ENCODE measurements at regions of chr2 and their contacts with region 1.

Region 1: DNA sequence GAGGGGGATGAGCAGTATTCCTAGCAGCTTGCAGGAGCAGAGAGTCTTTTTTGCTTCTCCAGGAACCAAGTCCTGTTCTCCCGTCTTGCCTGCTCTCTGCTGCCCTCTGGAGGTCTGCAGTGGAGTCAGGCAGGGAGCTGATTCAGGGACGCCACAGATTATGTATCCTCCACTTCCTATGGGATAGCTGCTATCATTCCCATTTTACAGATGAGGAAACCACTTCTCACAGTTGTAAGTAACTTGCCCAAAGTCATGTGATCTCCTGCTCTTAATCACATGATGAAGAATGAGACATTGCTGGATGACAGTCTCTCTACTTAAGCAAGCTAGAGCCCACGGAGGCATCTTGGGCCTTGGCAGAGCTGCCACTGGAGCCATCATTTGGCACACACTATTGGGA is 8.3 kb downstream of the SLC4A5 start:
- DNase-seq: peak; percentile 81
- ATAC-seq: peak; percentile 83
- H3K4me3 Mint-ChIP-seq: no peak overlapping the region
- H3K27ac Mint-ChIP-seq: no peak overlapping the region
- H3K4me1 Mint-ChIP-seq: no peaks in the 10 kb centered on the region
- H3K27me3 Mint-ChIP-seq: no peaks in the 10 kb centered on the region

Region 2: GRCh38 chr2:74250189-74250631 is 84.7 kb before region 1 on chr2:
- CTCF ChIA-PET with region 1: interaction called, 76 read pairs
- DNase-seq: peak; percentile 66
- ATAC-seq: peak; percentile 84
- H3K4me3 Mint-ChIP-seq: no peak overlapping the region
- H3K27ac Mint-ChIP-seq: no peak overlapping the region
- H3K4me1 Mint-ChIP-seq: peaks cover 5% of the 10 kb centered on the region
- H3K27me3 Mint-ChIP-seq: no peaks in the 10 kb centered on the region

Region 3: DNA sequence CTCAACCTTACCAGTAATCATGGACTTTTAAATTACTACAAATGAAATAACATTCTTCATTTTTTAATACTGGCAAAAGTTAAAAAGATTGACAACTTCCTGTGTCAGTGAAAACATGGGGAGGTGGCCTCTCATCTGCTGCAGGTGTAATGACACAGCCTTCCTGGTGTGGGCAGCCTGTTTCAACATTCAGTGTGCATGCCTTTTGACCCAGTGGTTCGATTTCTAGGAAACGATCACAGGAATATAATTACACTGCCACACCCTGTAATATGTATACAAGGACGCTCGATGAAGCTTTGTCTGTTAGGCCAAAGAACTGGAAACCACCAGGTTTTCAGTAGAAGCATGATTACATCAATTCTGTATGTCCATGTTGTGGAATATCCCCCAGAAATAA is 67.9 kb before region 1 on chr2:
- CTCF ChIA-PET with region 1: interaction called, 70 read pairs
- DNase-seq: peak; percentile 86
- ATAC-seq: peak; percentile 99
- H3K4me3 Mint-ChIP-seq: peak overlapping the region; percentile 18
- H3K27ac Mint-ChIP-seq: peak overlapping the region; percentile 86
- H3K4me1 Mint-ChIP-seq: peaks cover 15% of the 10 kb centered on the region
- H3K27me3 Mint-ChIP-seq: no peaks in the 10 kb centered on the region

Region 4: DNA sequence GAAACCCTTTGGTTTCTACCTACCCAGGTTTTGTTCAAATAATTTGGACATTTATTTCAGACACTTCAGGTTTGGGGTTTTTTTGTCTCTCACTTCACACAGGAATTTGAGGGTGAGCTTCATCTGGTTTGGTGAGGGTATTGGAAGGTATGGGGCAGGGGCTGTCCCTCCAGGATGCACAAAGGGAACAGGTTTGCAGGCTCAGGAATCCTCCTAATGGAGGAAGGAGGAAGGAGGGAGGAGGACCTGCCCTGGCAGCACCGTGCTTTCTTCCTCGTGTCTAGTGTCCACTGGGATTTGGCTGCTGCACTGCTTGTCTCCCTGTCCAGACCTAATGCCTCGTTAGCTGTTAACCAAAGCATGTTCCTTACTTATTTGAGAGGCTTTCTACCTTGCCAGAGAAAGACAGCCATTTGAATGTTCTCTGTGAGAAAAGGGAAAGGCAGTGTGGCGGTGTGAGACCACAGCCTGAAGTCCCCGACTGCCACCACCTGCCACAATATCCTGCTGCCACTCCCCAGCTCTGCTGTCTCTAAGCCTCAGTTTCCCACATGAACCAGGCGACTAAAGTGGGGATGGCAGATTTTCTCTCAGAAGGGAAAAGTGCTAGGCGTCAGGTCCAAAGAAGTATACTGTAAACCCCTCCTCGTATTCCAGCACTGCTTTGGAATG is 10.5 kb after region 1 on chr2:
- CTCF ChIA-PET with region 1: interaction called, 42 read pairs
- DNase-seq: peak; percentile 50
- ATAC-seq: no peak
- H3K4me3 Mint-ChIP-seq: no peak overlapping the region
- H3K27ac Mint-ChIP-seq: no peak overlapping the region
- H3K4me1 Mint-ChIP-seq: peaks cover 16% of the 10 kb centered on the region
- H3K27me3 Mint-ChIP-seq: peaks cover 10% of the 10 kb centered on the region

Region 5: GRCh38 chr2:74391580-74392448 is 56.9 kb after region 1 on chr2:
- CTCF ChIA-PET with region 1: interaction called, 32 read pairs
- DNase-seq: peak; percentile 96
- ATAC-seq: peak; percentile 82
- H3K4me3 Mint-ChIP-seq: peak overlapping the region; percentile 86
- H3K27ac Mint-ChIP-seq: peak overlapping the region; percentile 97
- H3K4me1 Mint-ChIP-seq: peaks cover 6% of the 10 kb centered on the region
- H3K27me3 Mint-ChIP-seq: peaks cover 8% of the 10 kb centered on the region

Region 6: DNA sequence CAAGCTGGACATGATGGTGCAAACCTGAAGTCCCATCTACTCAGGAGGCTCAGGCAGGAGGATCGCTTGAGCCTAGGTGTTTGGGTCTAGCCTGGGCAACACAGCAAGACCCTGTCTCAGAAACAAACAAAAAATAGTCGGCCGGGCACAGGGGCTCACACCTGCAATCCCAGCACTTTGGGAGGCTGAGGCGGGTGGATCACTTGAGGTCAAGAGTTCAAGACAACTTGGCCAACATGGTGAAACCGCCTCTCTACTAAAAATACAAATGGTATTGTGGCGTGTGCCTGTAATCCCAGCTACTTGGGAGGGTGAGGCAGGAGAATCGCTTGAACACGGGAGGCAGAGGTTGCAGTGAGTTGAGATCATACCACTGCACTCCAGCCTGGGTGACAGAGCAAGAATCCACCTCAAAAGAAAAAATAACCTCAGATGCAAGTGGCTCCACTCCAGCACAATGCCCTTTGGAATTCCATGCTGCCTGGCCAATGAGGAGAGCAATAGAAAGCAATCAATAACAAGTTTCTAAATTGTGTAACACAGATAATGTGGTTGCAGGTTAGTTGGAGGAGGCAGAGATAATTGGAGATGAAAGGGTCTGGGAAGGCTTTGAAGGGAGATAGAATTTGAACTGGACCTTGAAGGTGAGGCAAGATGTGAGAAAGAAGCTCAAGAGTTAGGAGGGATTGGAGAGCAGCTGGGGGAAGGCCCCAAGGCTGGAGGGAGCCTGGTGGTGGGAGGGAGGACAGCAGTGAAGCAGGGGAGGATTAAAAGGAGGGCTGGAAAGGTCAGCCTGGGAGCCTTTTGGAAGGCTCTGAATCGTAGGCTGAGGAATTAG is 153.9 kb after region 1 on chr2:
- CTCF ChIA-PET with region 1: no interaction called
- DNase-seq: no peak
- ATAC-seq: no peak
- H3K4me3 Mint-ChIP-seq: no peak overlapping the region
- H3K27ac Mint-ChIP-seq: no peak overlapping the region
- H3K4me1 Mint-ChIP-seq: peaks cover 13% of the 10 kb centered on the region
- H3K27me3 Mint-ChIP-seq: no peaks in the 10 kb centered on the region